ENCODE measurements at regions of chr15 and their contacts with region 1.

Region 1: DNA sequence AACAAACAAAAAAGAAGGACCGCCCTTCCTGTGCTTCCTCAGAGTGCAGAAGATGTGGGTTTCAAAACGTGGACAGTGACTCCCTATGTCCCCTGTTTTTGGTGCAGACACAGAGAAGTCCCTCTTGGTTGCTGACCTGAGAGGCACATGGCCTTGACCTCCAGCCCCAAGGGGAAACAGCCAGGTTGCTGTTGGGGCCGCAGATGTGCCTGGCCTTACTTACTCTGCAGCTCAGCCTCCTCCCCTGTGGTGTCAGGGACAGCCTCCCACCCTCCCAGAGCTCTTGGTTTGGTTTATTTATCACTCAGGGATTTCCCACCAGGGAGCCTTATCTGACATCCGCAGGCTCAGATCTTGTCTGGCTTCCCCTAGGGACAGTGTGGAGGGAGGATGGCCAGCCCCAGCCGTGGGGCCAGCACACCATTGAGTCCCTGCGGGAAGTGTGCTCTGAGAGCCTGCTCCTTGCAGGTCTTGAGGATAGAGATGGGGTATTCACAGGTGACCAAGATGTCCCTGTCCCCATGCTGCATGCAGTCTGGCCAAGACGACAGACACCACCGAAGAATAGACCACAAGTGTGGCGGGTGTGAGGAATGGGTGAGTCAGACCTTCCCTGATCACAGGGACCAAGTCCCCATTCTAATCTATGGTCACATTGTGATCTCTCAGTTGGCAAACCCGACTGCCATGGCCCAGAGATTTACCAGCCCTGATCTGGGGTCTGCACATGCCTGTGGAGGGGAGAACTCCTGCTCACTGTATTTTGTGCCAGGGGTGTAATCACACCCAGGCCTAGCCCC is 134.3 kb upstream of the ABHD17C start:
- DNase-seq: no peak
- ATAC-seq: no peak
- H3K4me3 ChIP-seq: no peak overlapping the region
- H3K27ac ChIP-seq: no peak overlapping the region
- H3K4me1 ChIP-seq: no peaks in the 10 kb centered on the region
- H3K27me3 ChIP-seq: peaks cover 0 to under 1% (median 0%) of the 10 kb centered on the region in 9 donors
- CTCF ChIP-seq: no peak
- POLR2A ChIP-seq: no peak

Region 2: DNA sequence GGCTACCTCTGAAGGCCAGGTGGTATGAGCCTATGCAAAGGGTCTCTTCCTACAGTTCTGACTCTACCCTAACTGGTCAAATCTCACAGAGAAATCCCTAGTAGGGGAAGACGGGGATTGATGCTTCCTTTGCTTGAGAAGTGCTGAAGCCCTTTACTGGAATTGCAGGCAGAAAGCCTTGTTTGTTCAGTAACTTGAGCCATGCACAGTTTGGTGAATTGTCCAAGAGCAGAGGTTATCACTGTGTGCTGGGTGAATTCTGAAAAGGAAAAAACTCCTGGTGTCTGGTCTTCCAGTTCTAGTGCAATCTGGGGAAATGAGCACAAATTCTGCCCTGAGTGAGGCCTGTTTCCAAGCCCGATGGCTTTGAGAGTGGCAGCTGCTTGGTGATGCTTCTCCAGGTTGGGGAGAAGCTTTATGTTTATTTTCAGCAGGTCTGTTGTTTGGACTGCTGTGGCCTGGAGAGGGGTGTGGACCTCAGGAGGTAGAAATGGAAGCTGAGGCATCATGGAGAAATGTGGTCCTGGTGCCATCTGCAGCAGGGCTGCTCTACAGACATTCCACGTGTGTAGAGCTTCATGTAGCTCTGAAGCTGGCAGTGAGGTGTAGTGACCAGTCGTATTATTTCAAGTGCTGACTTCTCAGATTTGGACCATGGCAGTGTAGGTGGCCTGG is 95.7 kb before region 1 on chr15:
- intact Hi-C with region 1: loop called in 1 of 10 experiments (anchors 5 kb)
- DNase-seq: no peak
- ATAC-seq: no peak
- H3K4me3 ChIP-seq: no peak overlapping the region
- H3K27ac ChIP-seq: no peak overlapping the region
- H3K4me1 ChIP-seq: peaks cover 0 to 4% (median 0%) of the 10 kb centered on the region in 12 donors
- H3K27me3 ChIP-seq: peaks cover 0 to 40% (median 0%) of the 10 kb centered on the region in 9 donors
- CTCF ChIP-seq: no peak
- POLR2A ChIP-seq: no peak

Region 3: GRCh38 chr15:80489030-80489594 is 71.7 kb before region 1 on chr15:
- intact Hi-C with region 1: no loop called
- DNase-seq: no peak
- ATAC-seq: peak in 3 of 4 donors; percentile 31 to 68 (median 43)
- H3K4me3 ChIP-seq: no peak overlapping the region
- H3K27ac ChIP-seq: peak overlapping the region in 5 of 12 donors; percentile 24 to 38 (median 32)
- H3K4me1 ChIP-seq: peaks cover 0 to 27% (median 12%) of the 10 kb centered on the region in 12 donors
- H3K27me3 ChIP-seq: peaks cover 0 to 8% (median 0%) of the 10 kb centered on the region in 9 donors
- CTCF ChIP-seq: no peak
- POLR2A ChIP-seq: no peak

Region 4: GRCh38 chr15:80585544-80586018 is 24.8 kb after region 1 on chr15:
- intact Hi-C with region 1: loop called in 1 of 10 experiments (anchors 2 kb)
- DNase-seq: no peak
- ATAC-seq: no peak
- H3K4me3 ChIP-seq: no peak overlapping the region
- H3K27ac ChIP-seq: no peak overlapping the region
- H3K4me1 ChIP-seq: no peaks in the 10 kb centered on the region
- H3K27me3 ChIP-seq: no peaks in the 10 kb centered on the region
- CTCF ChIP-seq: no peak
- POLR2A ChIP-seq: no peak